Mammary epithelial cell (primary cell): ENCODE measurements at regions of chr16 and their contacts with region 1.

Region 1: GRCh38 chr16:71358464-71358998 is at the start of gene CALB2:
- DNase-seq: peak; percentile 51
- H3K4me3 ChIP-seq: peak within 1 kb of the TSS; percentile 6 to 53 (median 41)
- H3K27ac ChIP-seq: no peak within 1 kb of the TSS
- H3K4me1 ChIP-seq: peaks cover 31% of the 10 kb centered on the region
- H3K27me3 ChIP-seq: no peaks in the 10 kb centered on the region
- CTCF ChIP-seq: peak; percentile 65 to 71
- total RNA-seq, gene CALB2: 1.5 to 16.7 TPM

Region 2: DNA sequence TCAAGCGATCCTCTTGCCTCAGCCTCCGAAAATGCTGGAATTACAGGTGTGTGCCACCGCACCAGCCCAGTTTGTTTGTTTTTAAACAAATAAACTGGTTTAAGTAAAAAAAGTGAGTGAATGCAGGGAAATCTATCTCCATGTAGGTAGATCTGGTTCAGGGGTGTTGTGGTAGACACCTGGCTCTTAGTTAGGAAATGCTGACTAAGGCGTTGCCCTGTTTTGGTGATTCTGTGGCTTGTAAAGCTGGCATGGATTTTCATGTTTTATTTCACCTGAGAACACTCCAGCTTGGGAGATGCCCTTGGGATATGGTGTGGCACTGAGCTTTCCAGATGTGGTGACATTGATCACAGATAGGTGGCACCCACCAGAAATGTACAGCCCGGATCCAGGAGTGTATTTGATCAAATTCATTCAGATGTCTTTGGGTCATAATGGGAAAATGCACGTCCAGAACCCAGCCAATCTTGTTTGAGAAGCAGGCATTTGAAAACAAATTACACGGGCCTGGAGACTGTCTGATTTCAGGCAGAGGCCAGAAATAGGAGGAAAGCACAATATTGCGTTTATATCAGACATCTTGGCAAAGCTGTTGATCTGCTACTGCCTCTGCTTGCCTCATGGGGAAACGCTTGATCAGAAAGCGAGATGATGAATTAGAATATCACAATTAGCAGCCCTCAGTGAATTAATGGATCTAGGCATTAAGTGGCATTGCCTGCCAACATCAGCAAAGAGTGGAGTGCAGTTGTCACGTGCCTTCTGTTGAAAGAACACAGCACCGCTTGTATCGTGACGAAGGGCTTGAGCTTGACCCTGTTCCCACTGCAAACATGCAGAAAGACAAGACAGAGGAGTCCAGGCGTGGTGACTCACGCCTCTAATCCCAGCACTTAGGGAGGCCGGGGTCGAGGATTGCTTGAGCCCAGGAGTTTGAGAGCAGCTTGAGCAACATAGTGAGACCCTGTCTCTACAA is 719.4 kb before region 1 on chr16:
- CTCF ChIA-PET with region 1: interaction called, 11 read pairs
- dilution Hi-C with region 1: no loop called
- in situ Hi-C with region 1: no loop called
- intact Hi-C with region 1: no loop called
- DNase-seq: no peak
- H3K4me3 ChIP-seq: no peak overlapping the region
- H3K27ac ChIP-seq: no peak overlapping the region
- H3K4me1 ChIP-seq: peaks cover 5% of the 10 kb centered on the region
- H3K27me3 ChIP-seq: no peaks in the 10 kb centered on the region
- CTCF ChIP-seq: no peak

Region 3: GRCh38 chr16:70778901-70779309 is 579.6 kb before region 1 on chr16:
- CTCF ChIA-PET with region 1: no interaction called
- dilution Hi-C with region 1: no loop called
- in situ Hi-C with region 1: loop called in 1 of 2 experiments (anchors 25 kb)
- intact Hi-C with region 1: no loop called
- DNase-seq: peak; percentile 88
- H3K4me3 ChIP-seq: no peak overlapping the region
- H3K27ac ChIP-seq: no peak overlapping the region
- H3K4me1 ChIP-seq: peaks cover 8% of the 10 kb centered on the region
- H3K27me3 ChIP-seq: no peaks in the 10 kb centered on the region
- CTCF ChIP-seq: no peak

Region 4: DNA sequence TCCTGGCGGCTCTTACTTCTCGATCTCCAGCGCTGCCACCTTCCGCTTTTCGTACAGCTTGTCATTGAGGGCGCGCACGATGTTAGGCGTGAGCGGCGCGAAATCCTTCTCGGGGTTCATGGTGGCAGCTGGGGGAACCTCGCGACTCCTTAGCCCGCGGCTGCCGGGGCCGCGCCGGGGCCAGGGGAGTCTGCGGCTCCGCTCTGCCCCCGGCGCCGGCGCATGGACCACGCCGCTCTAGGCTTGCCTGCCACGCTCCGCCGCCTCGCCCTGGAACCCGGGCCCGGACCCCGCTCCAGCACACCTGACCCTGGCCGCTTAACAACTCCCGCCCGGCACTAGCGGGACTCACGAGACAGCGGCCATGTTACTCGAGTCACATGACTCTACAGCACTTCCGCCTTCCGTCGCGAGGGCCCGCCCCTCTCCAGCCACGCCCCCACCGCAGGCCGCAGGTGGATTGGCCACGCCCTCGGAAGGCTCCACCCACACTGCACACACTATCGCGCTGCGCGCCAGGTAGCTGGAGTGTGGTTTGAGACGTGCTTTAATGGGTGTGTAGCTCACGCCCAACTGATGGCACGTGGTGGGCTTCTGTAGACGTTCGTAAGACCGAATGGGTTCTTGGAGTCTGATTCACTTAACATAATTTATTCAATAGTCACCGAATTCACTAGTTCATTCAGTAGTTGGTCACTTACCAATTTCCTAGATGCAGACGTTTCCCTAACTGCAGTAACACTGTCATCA is 557.6 kb before region 1 on chr16 and contains the start of gene VAC14:
- CTCF ChIA-PET with region 1: no interaction called
- dilution Hi-C with region 1: no loop called
- in situ Hi-C with region 1: loop called in 1 of 2 experiments (anchors 25 kb)
- intact Hi-C with region 1: loop called (anchors 10 kb)
- DNase-seq: peak; percentile 93
- H3K4me3 ChIP-seq: peak within 1 kb of the TSS; percentile 78 to 84 (median 80)
- H3K27ac ChIP-seq: peak within 1 kb of the TSS; percentile 60
- H3K4me1 ChIP-seq: peaks cover 36% of the 10 kb centered on the region
- H3K27me3 ChIP-seq: no peaks in the 10 kb centered on the region
- CTCF ChIP-seq: no peak
- total RNA-seq, gene VAC14: 29.5 to 39.5 TPM

Region 5: GRCh38 chr16:71214746-71215381 is 143.7 kb before region 1 on chr16:
- CTCF ChIA-PET with region 1: no interaction called
- dilution Hi-C with region 1: no loop called
- in situ Hi-C with region 1: no loop called
- intact Hi-C with region 1: loop called (anchors 5 kb)
- DNase-seq: peak; percentile 11
- H3K4me3 ChIP-seq: no peak overlapping the region
- H3K27ac ChIP-seq: no peak overlapping the region
- H3K4me1 ChIP-seq: no peaks in the 10 kb centered on the region
- H3K27me3 ChIP-seq: peaks cover 4% of the 10 kb centered on the region
- CTCF ChIP-seq: peak in 1 of 2 donors; percentile 38

Region 6: DNA sequence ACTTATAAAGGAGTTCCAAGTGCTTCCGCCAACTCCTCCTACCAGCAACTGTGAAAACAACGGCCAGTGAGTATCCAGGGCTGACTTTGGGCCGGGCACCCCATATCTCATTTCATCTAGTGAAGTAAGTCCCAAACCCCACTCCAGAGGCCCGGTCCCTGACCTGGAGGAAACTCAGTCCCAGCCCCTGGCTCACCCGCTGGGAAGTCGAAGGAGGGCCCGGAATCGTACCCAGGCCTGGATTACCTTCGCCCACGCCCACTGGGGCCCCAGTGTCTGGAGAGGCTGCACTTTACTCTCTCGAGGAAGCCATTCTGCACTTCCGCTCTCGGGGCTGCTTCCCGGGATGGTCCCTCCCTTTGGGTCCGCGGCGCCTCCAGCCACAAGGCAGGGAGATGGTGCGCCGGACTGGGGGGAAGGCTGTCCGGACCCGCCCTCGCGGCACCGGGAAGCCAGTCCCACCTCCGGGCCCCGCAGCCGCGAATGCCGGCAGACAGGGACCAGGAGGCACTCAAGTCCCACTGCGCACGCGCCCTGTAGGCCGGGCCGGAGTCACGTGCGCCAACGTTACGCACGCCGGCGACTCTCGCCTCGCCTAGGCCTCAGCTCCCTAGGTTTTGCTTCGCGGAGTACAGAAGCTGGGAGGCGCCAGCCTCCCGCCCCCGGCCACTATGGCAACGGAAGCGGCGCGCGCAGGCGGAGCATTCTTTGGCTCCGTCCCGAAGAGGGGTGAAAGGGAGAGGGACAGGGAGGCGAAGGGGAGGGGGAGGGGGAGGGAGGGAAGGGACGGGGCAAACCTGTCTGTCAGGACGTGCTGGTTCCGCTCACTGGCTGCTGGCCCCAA is 69.4 kb before region 1 on chr16 and contains the start of gene CMTR2:
- CTCF ChIA-PET with region 1: no interaction called
- dilution Hi-C with region 1: no loop called
- in situ Hi-C with region 1: no loop called
- intact Hi-C with region 1: loop called (anchors 2 kb)
- DNase-seq: peak; percentile 98
- H3K4me3 ChIP-seq: peak within 1 kb of the TSS; percentile 66 to 90 (median 68)
- H3K27ac ChIP-seq: peak within 1 kb of the TSS; percentile 84
- H3K4me1 ChIP-seq: peaks cover 4% of the 10 kb centered on the region
- H3K27me3 ChIP-seq: no peaks in the 10 kb centered on the region
- CTCF ChIP-seq: no peak
- total RNA-seq, gene CMTR2: 24.1 to 36.5 TPM

Region 7: DNA sequence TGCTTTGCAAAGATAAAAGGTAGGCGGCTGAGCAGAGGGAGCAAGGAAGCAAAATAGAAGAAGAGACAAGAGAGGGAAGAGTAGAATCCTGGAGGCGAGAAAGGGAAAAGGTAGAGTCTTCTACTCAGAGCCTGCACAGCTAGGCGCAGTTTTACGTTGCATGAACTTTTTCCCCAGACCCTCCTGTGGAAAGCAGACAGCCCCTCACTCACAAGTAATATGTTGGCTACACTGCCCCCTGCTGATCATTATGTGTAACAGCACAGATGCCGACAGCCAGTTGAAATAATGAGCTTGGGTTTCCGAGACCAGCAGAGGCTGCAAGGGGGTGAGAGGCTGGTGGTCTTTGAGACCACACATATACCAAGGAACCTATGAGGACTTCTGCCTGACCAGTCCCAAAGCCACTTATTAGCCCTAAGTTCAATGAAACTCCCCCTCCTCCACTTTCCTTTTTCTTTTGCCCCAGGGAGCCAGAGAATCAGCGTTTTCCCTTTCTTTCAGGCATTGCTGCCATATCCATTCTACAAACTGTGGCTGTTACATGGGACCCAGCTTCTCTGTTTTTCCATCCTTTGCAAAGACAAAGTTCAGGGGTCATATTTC is 46.9 kb before region 1 on chr16:
- CTCF ChIA-PET with region 1: interaction called, 4 read pairs
- dilution Hi-C with region 1: no loop called
- in situ Hi-C with region 1: no loop called
- intact Hi-C with region 1: loop called (anchors 5 kb)
- DNase-seq: no peak
- H3K4me3 ChIP-seq: no peak overlapping the region
- H3K27ac ChIP-seq: no peak overlapping the region
- H3K4me1 ChIP-seq: peaks cover 6% of the 10 kb centered on the region
- H3K27me3 ChIP-seq: no peaks in the 10 kb centered on the region
- CTCF ChIP-seq: peak; percentile 82 to 84